ENCODE measurements at regions of chr2 and their contacts with region 1.

Region 1: DNA sequence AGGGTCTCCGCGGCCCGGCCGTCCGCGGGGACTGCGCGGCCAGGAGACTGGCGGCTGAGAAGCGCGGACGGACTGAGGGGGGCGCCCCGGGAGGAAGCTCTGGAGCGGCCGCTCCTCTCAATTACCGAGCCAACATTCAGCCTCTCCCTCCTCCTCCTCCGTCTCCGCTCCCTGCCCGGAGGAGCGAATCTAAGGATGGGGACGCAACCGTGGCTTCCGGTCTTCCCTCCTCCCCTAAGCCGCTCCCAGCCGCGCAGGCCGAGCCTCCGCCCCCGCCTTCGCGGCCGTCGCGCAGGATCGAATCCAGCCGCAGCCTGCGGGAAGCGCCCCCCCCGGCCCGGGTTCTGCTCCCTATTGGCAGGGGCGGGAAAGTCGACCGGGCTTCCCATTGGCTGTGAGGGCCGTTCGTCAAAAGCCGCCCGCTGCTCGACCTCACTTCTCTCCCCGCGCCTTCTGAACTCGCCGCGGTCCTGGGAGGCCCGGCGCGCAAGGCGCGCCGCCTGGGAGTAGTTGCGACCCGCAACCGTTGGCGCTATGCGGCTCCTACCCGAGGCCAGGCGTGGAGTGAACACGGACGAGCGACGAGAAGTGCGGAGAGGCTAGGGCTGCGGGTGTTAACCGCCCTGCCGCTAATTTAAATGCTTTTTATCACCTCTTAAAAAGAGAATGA is at the start of gene HNRNPLL:
- DNase-seq: peak; percentile 70
- ATAC-seq: peak; percentile 92
- H3K4me3 ChIP-seq: peak within 1 kb of the TSS; percentile 85 to 88
- H3K27ac ChIP-seq: peak within 1 kb of the TSS; percentile 92
- H3K4me1 ChIP-seq: peaks cover 38% of the 10 kb centered on the region
- H3K27me3 ChIP-seq: no peaks in the 10 kb centered on the region
- CTCF ChIP-seq: no peak
- total RNA-seq, gene HNRNPLL: 69.8 TPM

Region 2: GRCh38 chr2:38037757-38038621 is 564.9 kb before region 1 on chr2:
- CTCF ChIA-PET with region 1: no interaction called
- POLR2A ChIA-PET with region 1: no interaction called
- in situ Hi-C with region 1: no loop called
- intact Hi-C with region 1: no loop called
- DNase-seq: no peak
- ATAC-seq: peak; percentile 70
- H3K4me3 ChIP-seq: peak overlapping the region; percentile 18 to 51
- H3K27ac ChIP-seq: no peak overlapping the region
- H3K4me1 ChIP-seq: no peaks in the 10 kb centered on the region; the same call in 1 of the 2 replicates
- H3K27me3 ChIP-seq: peaks cover 14% of the 10 kb centered on the region
- CTCF ChIP-seq: peak; percentile 35

Region 3: GRCh38 chr2:38665854-38666555 is 63.1 kb after region 1 on chr2 and contains the start of gene GALM:
- CTCF ChIA-PET with region 1: no interaction called
- POLR2A ChIA-PET with region 1: no interaction called
- in situ Hi-C with region 1: no loop called
- intact Hi-C with region 1: loop called (anchors 5 kb)
- DNase-seq: peak; percentile 61
- ATAC-seq: peak; percentile 94
- H3K4me3 ChIP-seq: peak within 1 kb of the TSS; percentile 63 to 89
- H3K27ac ChIP-seq: peak within 1 kb of the TSS; percentile 78
- H3K4me1 ChIP-seq: peaks cover 24% of the 10 kb centered on the region; the same call in 1 of the 2 replicates
- H3K27me3 ChIP-seq: no peaks in the 10 kb centered on the region
- CTCF ChIP-seq: no peak
- total RNA-seq, gene GALM: 20.5 TPM

Region 4: GRCh38 chr2:38720613-38721241 is 117.9 kb after region 1 on chr2:
- CTCF ChIA-PET with region 1: no interaction called
- POLR2A ChIA-PET with region 1: interaction called, 7 read pairs
- in situ Hi-C with region 1: loop called (anchors 25 kb)
- intact Hi-C with region 1: loop called (anchors 1 kb)
- DNase-seq: no peak
- ATAC-seq: peak; percentile 59
- H3K4me3 ChIP-seq: no peak overlapping the region
- H3K27ac ChIP-seq: peak overlapping the region; percentile 25
- H3K4me1 ChIP-seq: peaks cover 21% of the 10 kb centered on the region
- H3K27me3 ChIP-seq: no peaks in the 10 kb centered on the region
- CTCF ChIP-seq: no peak

Region 5: GRCh38 chr2:39033980-39034379 is 431.1 kb after region 1 on chr2:
- CTCF ChIA-PET with region 1: no interaction called
- POLR2A ChIA-PET with region 1: no interaction called
- in situ Hi-C with region 1: no loop called
- intact Hi-C with region 1: no loop called
- DNase-seq: no peak
- ATAC-seq: no peak
- H3K4me3 ChIP-seq: no peak overlapping the region
- H3K27ac ChIP-seq: no peak overlapping the region
- H3K4me1 ChIP-seq: no peaks in the 10 kb centered on the region
- H3K27me3 ChIP-seq: no peaks in the 10 kb centered on the region
- CTCF ChIP-seq: no peak

Measured in Panc1 (cell line).